ENCODE measurements at regions of chr5 and their contacts with region 1.

Region 1: GRCh38 chr5:142032747-142033631 is 20.2 kb upstream of the GNPDA1 start:
- DNase-seq: no peak
- ATAC-seq: no peak
- H3K4me3 ChIP-seq: no peak overlapping the region
- H3K4me3 Mint-ChIP-seq: no peak overlapping the region
- H3K27ac ChIP-seq: no peak overlapping the region
- H3K27ac Mint-ChIP-seq: no peak overlapping the region
- H3K4me1 ChIP-seq: peaks cover 18% of the 10 kb centered on the region
- H3K4me1 Mint-ChIP-seq: peaks cover 21% of the 10 kb centered on the region
- H3K27me3 ChIP-seq: no peaks in the 10 kb centered on the region
- H3K27me3 Mint-ChIP-seq: no peaks in the 10 kb centered on the region
- CTCF ChIP-seq: no peak

Region 2: DNA sequence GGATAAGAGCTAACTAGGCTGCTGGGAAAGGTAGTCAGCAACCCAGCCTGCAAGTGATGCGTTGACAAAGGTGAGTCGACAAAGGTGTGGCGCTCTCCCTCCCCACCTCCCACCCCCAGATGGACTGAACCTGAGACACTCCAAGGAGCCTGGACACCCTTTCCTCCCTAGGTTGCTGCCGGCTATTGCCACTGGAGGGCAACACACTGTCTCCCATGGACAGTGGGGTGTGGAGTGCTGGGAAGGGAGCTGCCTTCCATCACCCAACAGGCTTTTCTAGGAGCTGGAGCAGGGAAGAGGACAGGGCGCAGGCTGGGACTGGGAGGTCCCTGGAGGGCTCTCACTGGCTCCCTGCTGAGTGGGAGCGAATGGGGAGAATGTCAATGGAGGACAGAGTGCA is 275.6 kb before region 1 on chr5:
- CTCF ChIA-PET with region 1: no interaction called
- POLR2A ChIA-PET with region 1: no interaction called
- intact Hi-C with region 1: no loop called
- DNase-seq: no peak
- ATAC-seq: no peak
- H3K4me3 ChIP-seq: no peak overlapping the region
- H3K4me3 Mint-ChIP-seq: no peak overlapping the region
- H3K27ac ChIP-seq: no peak overlapping the region
- H3K27ac Mint-ChIP-seq: no peak overlapping the region
- H3K4me1 ChIP-seq: no peaks in the 10 kb centered on the region
- H3K4me1 Mint-ChIP-seq: peaks cover 6% of the 10 kb centered on the region
- H3K27me3 ChIP-seq: peaks cover 57 to 70% of the 10 kb centered on the region in 2 experiments
- H3K27me3 Mint-ChIP-seq: peaks cover 94% of the 10 kb centered on the region
- CTCF ChIP-seq: no peak

Region 3: GRCh38 chr5:141951332-141951781 is 81.6 kb before region 1 on chr5:
- CTCF ChIA-PET with region 1: no interaction called
- POLR2A ChIA-PET with region 1: no interaction called
- intact Hi-C with region 1: no loop called
- DNase-seq: peak in 4 of 14 experiments; percentile 19 to 50 (median 42)
- ATAC-seq: peak; percentile 83
- H3K4me3 ChIP-seq: no peak overlapping the region
- H3K4me3 Mint-ChIP-seq: peak overlapping the region; percentile 51
- H3K27ac ChIP-seq: no peak overlapping the region
- H3K27ac Mint-ChIP-seq: no peak overlapping the region
- H3K4me1 ChIP-seq: peaks cover 7% of the 10 kb centered on the region
- H3K4me1 Mint-ChIP-seq: peaks cover 16% of the 10 kb centered on the region
- H3K27me3 ChIP-seq: no peaks in the 10 kb centered on the region
- H3K27me3 Mint-ChIP-seq: no peaks in the 10 kb centered on the region
- CTCF ChIP-seq: peak; percentile 39

Region 4: DNA sequence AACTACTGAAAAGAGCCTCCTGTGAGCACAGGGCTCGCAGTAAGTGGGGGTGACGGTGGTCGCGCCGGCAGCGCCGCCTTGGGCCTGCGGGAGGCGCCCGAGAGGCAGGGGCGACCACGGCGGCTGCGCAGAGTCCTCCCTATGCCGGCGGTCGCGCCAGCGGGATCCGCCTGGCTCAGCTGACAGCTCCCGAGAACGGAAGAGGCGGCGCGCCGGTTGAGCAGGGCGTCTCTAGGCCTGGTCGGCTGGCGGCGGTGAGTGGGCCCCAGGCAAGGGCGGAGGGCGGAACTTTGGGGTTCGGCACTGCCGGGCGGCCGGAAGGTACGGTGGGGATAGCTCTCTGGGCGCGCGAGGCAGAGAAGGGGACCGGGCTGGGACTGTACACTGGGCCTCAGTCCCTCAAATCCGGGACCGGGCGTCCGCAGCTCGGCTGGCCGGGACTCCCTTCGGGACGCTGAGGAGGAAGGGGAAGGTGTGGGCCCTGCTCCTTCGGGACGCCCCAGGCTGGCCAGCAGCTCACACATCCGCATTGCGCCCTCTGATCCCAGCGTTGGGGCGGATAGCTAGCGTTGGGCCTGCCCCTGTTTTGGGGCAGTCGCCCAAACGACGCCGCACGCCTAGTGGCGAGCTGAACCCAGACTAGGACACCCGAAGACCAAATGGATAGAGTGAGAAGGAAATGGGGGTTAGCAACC is 63.9 kb before region 1 on chr5 and contains the start of gene RNF14:
- CTCF ChIA-PET with region 1: no interaction called
- POLR2A ChIA-PET with region 1: no interaction called
- intact Hi-C with region 1: no loop called
- DNase-seq: peak; percentile 86 to 97 (median 90)
- ATAC-seq: peak; percentile 95
- H3K4me3 ChIP-seq: peak within 1 kb of the TSS; percentile 76
- H3K4me3 Mint-ChIP-seq: peak within 1 kb of the TSS; percentile 98
- H3K27ac ChIP-seq: peak within 1 kb of the TSS; percentile 90 to 95
- H3K27ac Mint-ChIP-seq: peak within 1 kb of the TSS; percentile 99
- H3K4me1 ChIP-seq: peaks cover 15% of the 10 kb centered on the region
- H3K4me1 Mint-ChIP-seq: peaks cover 41% of the 10 kb centered on the region
- H3K27me3 ChIP-seq: no peaks in the 10 kb centered on the region
- H3K27me3 Mint-ChIP-seq: no peaks in the 10 kb centered on the region
- CTCF ChIP-seq: peak; percentile 97
- total RNA-seq, gene RNF14: 8.9 to 10.7 TPM

Region 5: GRCh38 chr5:142073362-142073988 is 40.5 kb after region 1 on chr5:
- CTCF ChIA-PET with region 1: no interaction called
- POLR2A ChIA-PET with region 1: interaction called, 3 read pairs
- intact Hi-C with region 1: loop called in 1 of 2 experiments (anchors 5 kb)
- DNase-seq: no peak
- ATAC-seq: no peak
- H3K4me3 ChIP-seq: no peak overlapping the region
- H3K4me3 Mint-ChIP-seq: no peak overlapping the region
- H3K27ac ChIP-seq: no peak overlapping the region
- H3K27ac Mint-ChIP-seq: no peak overlapping the region
- H3K4me1 ChIP-seq: no peaks in the 10 kb centered on the region
- H3K4me1 Mint-ChIP-seq: peaks cover 23% of the 10 kb centered on the region
- H3K27me3 ChIP-seq: no peaks in the 10 kb centered on the region
- H3K27me3 Mint-ChIP-seq: no peaks in the 10 kb centered on the region
- CTCF ChIP-seq: no peak

Measured in CD4-positive, alpha-beta T cell (primary cell).